ENCODE measurements at regions of chr19 and their contacts with region 1.

Region 1: DNA sequence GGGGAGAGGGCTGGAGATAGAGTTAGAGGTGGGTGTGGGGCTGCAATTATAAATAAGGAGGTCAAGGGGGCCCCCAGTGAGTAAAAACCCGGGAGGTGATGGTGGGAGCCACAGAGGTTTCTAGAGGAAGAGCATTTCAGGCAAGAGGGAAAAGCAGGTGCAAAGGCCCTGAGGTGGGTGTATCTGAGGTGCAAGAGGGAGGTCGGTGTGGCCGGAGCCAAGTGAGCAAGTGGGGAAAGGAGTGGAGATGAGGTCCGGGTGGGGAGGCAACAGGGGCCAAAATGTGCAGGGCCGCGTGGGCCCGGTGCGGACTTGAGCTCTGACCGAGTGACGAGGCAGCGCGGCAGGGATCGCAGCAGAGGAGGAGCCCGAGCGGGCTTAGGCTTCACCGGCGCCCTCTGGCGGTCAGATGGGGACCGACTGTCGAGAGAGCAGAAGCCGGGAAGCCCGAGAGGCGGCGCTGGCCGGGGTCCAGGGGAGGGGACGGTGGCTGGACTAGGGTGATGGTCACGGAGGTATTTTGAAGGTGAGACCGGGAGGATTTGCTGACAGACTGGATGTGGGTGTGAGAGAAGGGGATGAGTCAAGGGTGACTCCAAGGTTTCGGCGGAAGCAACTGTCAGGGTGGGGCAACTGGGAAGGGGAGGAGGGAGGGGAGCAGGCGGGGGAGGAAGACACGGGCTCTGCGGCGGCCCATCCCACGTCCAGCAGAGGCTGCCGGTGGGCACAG is 17.7 kb upstream of the SPACA4 start:
- DNase-seq: peak; percentile 93
- H3K27ac ChIP-seq: peak overlapping the region; percentile 74
- CTCF ChIP-seq: peak; percentile 93

Region 2: DNA sequence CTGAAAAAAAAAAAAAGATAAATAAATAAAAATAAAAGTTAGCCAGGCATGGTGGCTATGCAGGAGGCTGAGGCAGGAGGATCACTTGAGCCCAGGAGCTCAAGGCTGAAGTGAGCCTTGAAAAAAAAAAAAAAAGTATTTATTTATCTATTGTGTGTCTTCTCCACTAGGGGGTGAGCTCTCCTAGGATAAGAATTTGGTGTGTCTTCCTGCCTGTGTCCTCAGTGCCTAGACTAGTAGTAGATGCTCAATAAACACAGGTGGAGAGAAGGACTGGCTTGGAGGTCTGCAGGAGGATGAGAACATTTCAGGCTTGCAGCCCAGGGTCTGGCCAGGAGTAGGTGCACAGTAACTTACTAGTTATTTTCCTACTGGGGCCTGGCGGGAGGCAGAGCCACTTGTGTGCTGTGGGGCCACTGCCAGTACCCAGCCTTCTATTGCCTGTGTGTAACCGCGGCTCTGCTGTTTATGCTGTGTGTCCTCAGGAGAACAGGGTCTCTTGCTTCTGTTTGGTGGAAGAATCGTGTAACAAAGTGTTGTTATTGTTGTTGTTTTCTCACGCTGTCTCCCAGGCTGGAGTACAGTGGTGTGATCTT is 82.6 kb before region 1 on chr19:
- CTCF ChIA-PET with region 1: interaction called, 16 read pairs
- POLR2A ChIA-PET with region 1: no interaction called
- DNase-seq: peak; percentile 36
- H3K27ac ChIP-seq: no peak overlapping the region; the same call in 1 of the 2 replicates
- CTCF ChIP-seq: peak; percentile 40